Psoas muscle (tissue), 8 donors: ENCODE measurements at regions of chr15 and their contacts with region 1.

Region 1: GRCh38 chr15:29309139-29309538 is 39.5 kb upstream of the NSMCE3 start:
- DNase-seq: no peak
- ATAC-seq: no peak
- H3K4me3 ChIP-seq: no peak overlapping the region
- H3K27ac ChIP-seq: no peak overlapping the region
- H3K4me1 ChIP-seq: no peaks in the 10 kb centered on the region
- H3K27me3 ChIP-seq: peaks cover 0 to 2% (median 0%) of the 10 kb centered on the region in 3 donors
- CTCF ChIP-seq: no peak

Region 2: GRCh38 chr15:29225534-29226234 is 83.5 kb before region 1 on chr15:
- intact Hi-C with region 1: loop called in 1 of 2 experiments (anchors 10 kb)
- DNase-seq: no peak
- ATAC-seq: no peak
- H3K4me3 ChIP-seq: no peak overlapping the region
- H3K27ac ChIP-seq: no peak overlapping the region
- H3K4me1 ChIP-seq: no peaks in the 10 kb centered on the region
- H3K27me3 ChIP-seq: peaks cover 0 to 16% (median 5%) of the 10 kb centered on the region in 3 donors
- CTCF ChIP-seq: no peak